ENCODE measurements at regions of chr2 and their contacts with region 1.

Region 1: GRCh38 chr2:241637000-241637791 is at the starts of genes ATG4B and THAP4:
- DNase-seq: peak; percentile 61 to 89 (median 79)
- ATAC-seq: peak; percentile 82
- H3K4me3 ChIP-seq: peak within 1 kb of the TSS; percentile 99
- H3K4me3 Mint-ChIP-seq: peak within 1 kb of the TSS; percentile 85 to 98 (median 92)
- H3K27ac ChIP-seq: peak within 1 kb of the TSS; percentile 99
- H3K27ac Mint-ChIP-seq: peak within 1 kb of the TSS; percentile 48 to 98 (median 94)
- H3K4me1 ChIP-seq: peaks cover 26 to 27% of the 10 kb centered on the region in 2 donors
- H3K4me1 Mint-ChIP-seq: peaks cover 43 to 63% (median 55%) of the 10 kb centered on the region in 7 donors
- H3K27me3 ChIP-seq: no peaks in the 10 kb centered on the region
- H3K27me3 Mint-ChIP-seq: no peaks in the 10 kb centered on the region
- total RNA-seq, gene ATG4B: 87.2 to 131 (median 95.0) TPM
- total RNA-seq, gene THAP4: 26.4 to 34.8 (median 28.1) TPM

Region 2: GRCh38 chr2:240733803-240734495 is 903.2 kb before region 1 on chr2:
- CTCF ChIA-PET with region 1: no interaction called
- POLR2A ChIA-PET with region 1: no interaction called
- intact Hi-C with region 1: no loop called
- DNase-seq: peak in 5 of 9 donors; percentile 10 to 36 (median 16)
- ATAC-seq: peak; percentile 22
- H3K4me3 ChIP-seq: no peak overlapping the region
- H3K4me3 Mint-ChIP-seq: no peak overlapping the region
- H3K27ac ChIP-seq: no peak overlapping the region
- H3K27ac Mint-ChIP-seq: peak overlapping the region in 1 of 9 donors; percentile 10
- H3K4me1 ChIP-seq: no peaks in the 10 kb centered on the region
- H3K4me1 Mint-ChIP-seq: peaks cover 0 to 2% (median 0%) of the 10 kb centered on the region in 7 donors
- H3K27me3 ChIP-seq: no peaks in the 10 kb centered on the region
- H3K27me3 Mint-ChIP-seq: peaks cover 0 to 7% (median 0%) of the 10 kb centered on the region in 5 donors

Region 3: DNA sequence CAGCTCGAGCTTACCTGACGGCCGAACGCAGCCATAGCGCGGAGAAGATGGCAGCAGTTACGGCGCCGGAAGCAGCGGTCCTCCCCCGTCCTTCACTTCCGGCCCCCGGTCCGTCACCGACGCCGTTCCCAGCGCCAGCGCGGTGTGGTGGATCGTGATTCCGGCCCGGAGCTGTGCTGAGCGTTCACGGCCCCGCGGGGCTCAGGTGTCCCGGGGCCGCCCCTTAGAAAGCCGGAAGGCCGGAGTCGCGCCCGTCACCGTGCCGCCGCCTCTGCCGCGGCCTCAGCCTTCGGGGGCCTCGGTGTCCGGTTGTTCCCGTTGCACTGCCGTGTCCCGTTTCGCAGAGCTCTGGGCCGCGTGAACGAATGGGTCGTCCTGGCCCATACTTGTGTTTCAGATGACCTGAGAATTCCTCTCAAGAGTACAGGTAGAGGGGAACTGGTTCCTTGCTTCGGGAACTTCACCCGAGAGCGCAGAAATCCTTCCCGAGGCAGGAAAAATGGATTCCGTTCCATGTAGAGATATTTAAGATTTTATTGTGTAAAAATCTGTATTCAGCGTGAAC is 534.9 kb before region 1 on chr2 and contains the start of gene MTERF4:
- CTCF ChIA-PET with region 1: no interaction called
- POLR2A ChIA-PET with region 1: no interaction called
- intact Hi-C with region 1: loop called in 1 of 2 experiments (anchors 2 kb)
- DNase-seq: peak; percentile 80 to 91 (median 86)
- ATAC-seq: peak; percentile 98
- H3K4me3 ChIP-seq: peak within 1 kb of the TSS; percentile 89
- H3K4me3 Mint-ChIP-seq: peak within 1 kb of the TSS; percentile 86 to 99 (median 96)
- H3K27ac ChIP-seq: peak within 1 kb of the TSS; percentile 92
- H3K27ac Mint-ChIP-seq: peak within 1 kb of the TSS; percentile 96 to 99 (median 99)
- H3K4me1 ChIP-seq: peaks cover 29 to 55% of the 10 kb centered on the region in 2 donors
- H3K4me1 Mint-ChIP-seq: peaks cover 27 to 84% (median 64%) of the 10 kb centered on the region in 7 donors
- H3K27me3 ChIP-seq: no peaks in the 10 kb centered on the region
- H3K27me3 Mint-ChIP-seq: no peaks in the 10 kb centered on the region
- total RNA-seq, gene MTERF4: 45.3 to 214 (median 91.8) TPM

Region 4: GRCh38 chr2:241609859-241610793 is 27.1 kb before region 1 on chr2:
- CTCF ChIA-PET with region 1: interaction called, 5 read pairs
- POLR2A ChIA-PET with region 1: interaction called, 3 read pairs
- intact Hi-C with region 1: loop called in 1 of 2 experiments (anchors 1 kb)
- DNase-seq: peak; percentile 87 to 92 (median 90)
- ATAC-seq: peak; percentile 99
- H3K4me3 ChIP-seq: peak overlapping the region; percentile 53
- H3K4me3 Mint-ChIP-seq: peak overlapping the region in 9 of 10 donors; percentile 61 to 79 (median 71)
- H3K27ac ChIP-seq: peak overlapping the region; percentile 61
- H3K27ac Mint-ChIP-seq: peak overlapping the region; percentile 9 to 95 (median 68)
- H3K4me1 ChIP-seq: peaks cover 14 to 17% of the 10 kb centered on the region in 2 donors
- H3K4me1 Mint-ChIP-seq: peaks cover 16 to 33% (median 24%) of the 10 kb centered on the region in 7 donors
- H3K27me3 ChIP-seq: no peaks in the 10 kb centered on the region
- H3K27me3 Mint-ChIP-seq: no peaks in the 10 kb centered on the region

Region 5: GRCh38 chr2:241686649-241687425 is 49.6 kb after region 1 on chr2 and contains the start of gene DTYMK:
- CTCF ChIA-PET with region 1: no interaction called
- POLR2A ChIA-PET with region 1: no interaction called
- intact Hi-C with region 1: loop called (anchors 1 kb)
- DNase-seq: peak; percentile 92 to 98 (median 97)
- ATAC-seq: peak; percentile 97
- H3K4me3 ChIP-seq: peak within 1 kb of the TSS; percentile 91
- H3K4me3 Mint-ChIP-seq: peak within 1 kb of the TSS; percentile 84 to 98 (median 95)
- H3K27ac ChIP-seq: peak within 1 kb of the TSS; percentile 81
- H3K27ac Mint-ChIP-seq: peak within 1 kb of the TSS; percentile 74 to 96 (median 88)
- H3K4me1 ChIP-seq: peaks cover 8 to 18% of the 10 kb centered on the region in 2 donors
- H3K4me1 Mint-ChIP-seq: peaks cover 4 to 40% (median 31%) of the 10 kb centered on the region in 7 donors
- H3K27me3 ChIP-seq: no peaks in the 10 kb centered on the region
- H3K27me3 Mint-ChIP-seq: no peaks in the 10 kb centered on the region
- total RNA-seq, gene DTYMK: 12.0 to 65.7 (median 17.0) TPM

Region 6: DNA sequence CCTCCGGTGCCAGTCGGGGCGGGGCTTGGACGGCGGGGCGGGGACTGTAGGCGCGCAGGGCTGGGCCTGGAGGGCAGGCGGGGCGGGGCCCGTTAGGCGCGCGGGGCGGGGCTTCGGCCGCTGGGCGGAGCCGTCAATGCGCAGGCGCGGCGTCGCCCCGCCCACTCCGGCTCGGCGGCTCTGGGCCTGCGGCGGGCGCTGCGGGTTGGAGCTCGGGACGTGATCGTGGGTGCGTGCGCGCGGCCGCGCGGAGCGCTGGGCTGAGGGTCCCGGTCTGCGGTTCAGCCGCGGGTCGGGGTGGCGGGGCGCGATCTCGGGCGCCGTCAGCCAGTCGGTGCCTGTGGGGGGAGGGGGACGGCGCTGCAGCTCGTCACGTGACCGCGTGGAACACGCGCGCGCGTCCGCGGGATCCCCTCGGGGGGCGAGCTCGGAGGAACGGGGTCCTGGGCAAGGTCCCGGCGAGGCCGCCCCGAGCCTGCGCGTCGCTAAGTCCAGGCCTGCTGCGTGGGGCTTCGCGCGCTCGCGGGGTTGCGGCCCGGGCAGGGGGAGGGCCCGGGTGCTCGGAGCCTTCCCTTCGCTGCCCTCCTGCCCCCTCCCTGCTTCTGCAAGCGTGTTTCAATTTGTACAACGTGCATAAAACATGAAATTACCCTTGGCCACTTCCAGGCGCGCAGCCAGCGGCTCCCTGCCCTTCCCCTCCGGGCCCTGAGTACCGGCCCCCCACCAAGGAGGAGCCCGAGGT is 97.4 kb after region 1 on chr2 and contains the start of gene D2HGDH:
- CTCF ChIA-PET with region 1: no interaction called
- POLR2A ChIA-PET with region 1: interaction called, 4 read pairs
- intact Hi-C with region 1: loop called (anchors 1 kb)
- DNase-seq: peak; percentile 85 to 99 (median 91)
- ATAC-seq: peak; percentile 98
- H3K4me3 ChIP-seq: peak within 1 kb of the TSS; percentile 88
- H3K4me3 Mint-ChIP-seq: peak within 1 kb of the TSS; percentile 79 to 89 (median 84)
- H3K27ac ChIP-seq: peak within 1 kb of the TSS; percentile 75
- H3K27ac Mint-ChIP-seq: peak within 1 kb of the TSS in 8 of 9 donors; percentile 40 to 79 (median 72)
- H3K4me1 ChIP-seq: peaks cover 9% of the 10 kb centered on the region in 2 donors
- H3K4me1 Mint-ChIP-seq: peaks cover 9 to 54% (median 43%) of the 10 kb centered on the region in 7 donors
- H3K27me3 ChIP-seq: no peaks in the 10 kb centered on the region
- H3K27me3 Mint-ChIP-seq: no peaks in the 10 kb centered on the region
- total RNA-seq, gene D2HGDH: 32.5 to 49.8 (median 41.1) TPM